Left colon (tissue), 2 donors: ENCODE measurements at regions of chr11 and their contacts with region 1.

Region 1: DNA sequence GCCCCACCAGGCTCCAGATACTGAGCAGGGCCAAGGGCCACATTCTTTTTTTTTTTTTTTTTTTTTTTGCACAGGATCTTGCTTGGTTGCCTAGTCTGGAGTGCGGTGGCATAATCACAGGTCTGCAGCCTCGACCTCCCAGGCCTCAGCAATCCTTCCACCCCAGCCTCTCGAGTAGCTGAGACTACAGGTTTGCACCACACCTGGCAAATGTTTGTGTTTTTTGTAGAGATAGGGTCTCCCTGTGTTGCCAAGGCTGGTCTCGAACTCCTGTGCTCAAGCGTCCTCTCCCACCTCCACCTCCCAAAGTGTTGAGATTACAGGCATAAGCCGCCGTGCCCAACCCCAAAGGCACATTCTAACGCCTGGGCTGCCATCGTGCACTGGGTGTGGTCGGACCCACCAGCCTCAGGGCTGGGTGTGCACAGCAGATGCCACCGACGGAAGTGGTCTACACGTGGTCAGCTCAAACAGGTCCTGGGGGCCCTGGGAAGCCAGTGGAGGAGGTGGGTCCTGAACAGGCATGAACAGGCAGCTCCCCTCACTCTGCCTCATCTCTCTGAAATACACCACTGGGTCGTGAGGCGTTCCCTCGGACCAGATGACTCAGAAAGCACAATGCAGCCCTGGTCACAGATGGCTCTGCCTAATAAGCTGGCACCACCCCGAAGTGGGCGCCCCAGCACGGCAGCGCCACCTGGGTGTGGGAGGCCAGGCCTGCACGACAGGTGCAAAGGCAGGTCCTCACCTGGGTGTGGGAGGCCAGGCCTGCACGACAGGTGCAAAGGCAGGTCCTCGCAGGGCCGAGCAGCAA is 5.1 kb upstream of the B4GALNT4 start:
- DNase-seq: peak; percentile 69 to 88
- ATAC-seq: peak; percentile 98

Region 2: GRCh38 chr11:250740-251299 is 113.3 kb before region 1 on chr11:
- intact Hi-C with region 1: loop called in 1 of 2 experiments (anchors 10 kb)
- DNase-seq: peak in 1 of 2 donors; percentile 62
- ATAC-seq: peak; percentile 84